ENCODE measurements at regions of chr12 and their contacts with region 1.

Region 1: DNA sequence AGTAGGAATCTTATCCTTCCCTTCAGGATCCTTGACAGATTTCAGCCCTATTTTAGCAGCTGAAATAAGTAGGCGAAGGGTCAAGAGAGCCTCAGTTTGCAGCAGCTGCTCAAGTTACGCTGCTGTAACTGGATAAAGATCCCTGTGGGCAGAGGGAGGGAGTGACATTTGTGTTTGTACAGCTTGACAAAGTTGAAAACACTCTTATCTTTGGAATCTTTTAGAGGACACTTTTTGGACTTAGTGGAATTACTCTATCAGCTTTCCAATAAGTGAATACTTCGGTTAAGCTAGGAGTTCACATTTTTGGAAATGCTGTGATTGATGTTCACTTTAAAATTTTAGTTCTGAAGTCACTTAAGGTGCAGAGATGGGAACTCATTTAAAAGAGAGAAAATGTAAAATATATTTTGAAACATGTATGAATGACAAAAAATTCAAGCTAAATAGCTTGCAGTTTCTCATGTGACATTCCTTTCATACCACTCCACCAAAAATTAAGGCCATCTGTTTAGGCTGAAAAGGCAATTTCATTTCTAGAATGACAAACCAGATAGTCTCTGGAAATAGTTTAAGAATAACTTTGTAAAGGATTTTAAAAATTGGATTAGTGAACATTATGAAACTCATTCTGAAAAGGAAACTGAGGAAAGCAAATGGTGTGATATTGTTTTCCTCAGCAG is 55.2 kb downstream of the SLC38A4 start:
- DNase-seq: peak; percentile 63 to 64
- ATAC-seq: peak; percentile 75 to 79
- H3K4me3 ChIP-seq: peak overlapping the region in 3 of 4 donors; percentile 0 to 21 (median 10)
- H3K27ac ChIP-seq: peak overlapping the region; percentile 85 to 90 (median 88)
- H3K4me1 ChIP-seq: peaks cover 50 to 67% of the 10 kb centered on the region in 2 donors
- H3K27me3 ChIP-seq: no peaks in the 10 kb centered on the region
- CTCF ChIP-seq: peak in 1 of 5 experiments; percentile 8
- POLR2A ChIP-seq: peak in 1 of 2 donors; percentile 56

Region 2: DNA sequence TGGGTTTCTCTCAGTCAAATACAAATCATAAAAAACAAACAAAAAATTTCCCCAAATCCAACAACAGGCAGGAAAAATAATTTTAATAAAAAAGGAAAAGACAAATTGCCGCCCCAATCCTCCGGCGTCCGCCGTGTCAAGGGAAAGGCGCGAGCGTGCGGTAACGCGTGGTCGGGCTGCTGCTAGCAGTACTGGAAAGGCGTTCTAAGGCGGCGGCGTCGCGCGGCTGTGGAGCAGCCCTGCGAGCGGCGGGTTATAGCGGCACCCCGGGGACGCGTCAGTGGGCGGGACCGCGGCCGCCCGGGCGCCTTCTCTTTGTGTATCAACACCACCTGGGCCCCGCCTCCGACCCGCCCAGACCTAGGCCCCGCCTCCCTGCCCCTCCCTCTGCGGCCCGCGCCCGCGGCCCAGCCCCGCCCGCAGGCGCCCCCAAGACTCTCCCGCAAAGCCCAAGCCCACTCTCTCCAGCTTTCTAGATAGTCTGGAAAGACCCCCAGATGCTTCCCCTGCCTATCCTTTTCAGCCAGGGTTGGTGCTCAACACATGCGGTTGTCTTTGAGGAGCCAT is 398.0 kb before region 1 on chr12 and contains the start of gene SLC38A2:
- in situ Hi-C with region 1: no loop called
- intact Hi-C with region 1: loop called (anchors 5 kb)
- DNase-seq: peak; percentile 97 to 98
- ATAC-seq: peak; percentile 69 to 71
- H3K4me3 ChIP-seq: peak within 1 kb of the TSS; percentile 68 to 87 (median 80)
- H3K27ac ChIP-seq: peak within 1 kb of the TSS; percentile 93 to 97 (median 95)
- H3K4me1 ChIP-seq: peaks cover 38 to 46% of the 10 kb centered on the region in 2 donors
- H3K27me3 ChIP-seq: no peaks in the 10 kb centered on the region
- CTCF ChIP-seq: no peak
- POLR2A ChIP-seq: peak; percentile 100
- total RNA-seq, gene SLC38A2: 260 to 853 (median 400) TPM

Region 3: GRCh38 chr12:46717868-46718267 is 52.8 kb before region 1 on chr12:
- in situ Hi-C with region 1: no loop called
- intact Hi-C with region 1: loop called (anchors 5 kb)
- DNase-seq: no peak
- ATAC-seq: peak; percentile 84 to 96
- H3K4me3 ChIP-seq: no peak overlapping the region
- H3K27ac ChIP-seq: peak overlapping the region; percentile 28 to 62 (median 57)
- H3K4me1 ChIP-seq: peaks cover 10 to 19% of the 10 kb centered on the region in 2 donors
- H3K27me3 ChIP-seq: no peaks in the 10 kb centered on the region
- CTCF ChIP-seq: no peak
- POLR2A ChIP-seq: no peak

Region 4: GRCh38 chr12:46891306-46891705 is 120.7 kb after region 1 on chr12:
- in situ Hi-C with region 1: no loop called
- intact Hi-C with region 1: loop called (anchors 5 kb)
- DNase-seq: peak; percentile 53
- ATAC-seq: peak; percentile 84 to 88
- H3K4me3 ChIP-seq: no peak overlapping the region
- H3K27ac ChIP-seq: peak overlapping the region; percentile 70 to 85 (median 74)
- H3K4me1 ChIP-seq: peaks cover 27 to 29% of the 10 kb centered on the region in 2 donors
- H3K27me3 ChIP-seq: no peaks in the 10 kb centered on the region
- CTCF ChIP-seq: no peak
- POLR2A ChIP-seq: no peak

Region 5: DNA sequence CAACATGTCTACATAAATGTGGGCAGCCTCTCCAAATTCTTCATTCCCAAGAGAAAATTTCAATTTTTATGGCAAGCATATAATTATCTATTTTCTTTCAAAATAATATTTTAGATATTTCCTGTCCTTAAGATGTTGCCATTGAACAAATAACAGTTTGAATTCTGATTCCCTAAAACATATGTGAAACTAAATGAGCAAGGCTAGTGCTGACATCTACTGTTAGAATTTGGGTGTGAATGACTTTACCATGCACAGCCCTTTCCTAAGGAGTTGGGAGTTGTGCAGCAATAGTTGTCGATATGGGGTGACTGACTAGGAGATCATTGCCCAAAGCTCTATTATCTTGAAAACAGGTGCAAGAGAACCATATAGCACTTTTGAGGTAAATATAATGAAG is 163.3 kb after region 1 on chr12:
- in situ Hi-C with region 1: no loop called
- intact Hi-C with region 1: loop called (anchors 5 kb)
- DNase-seq: no peak
- ATAC-seq: peak; percentile 91 to 92
- H3K4me3 ChIP-seq: no peak overlapping the region
- H3K27ac ChIP-seq: no peak overlapping the region
- H3K4me1 ChIP-seq: peaks cover 4 to 5% of the 10 kb centered on the region in 2 donors
- H3K27me3 ChIP-seq: no peaks in the 10 kb centered on the region
- CTCF ChIP-seq: peak; percentile 41 to 63 (median 55)
- POLR2A ChIP-seq: no peak